AG04450 (cell line): ENCODE measurements at regions of chr13 and their contacts with region 1.

Region 1: DNA sequence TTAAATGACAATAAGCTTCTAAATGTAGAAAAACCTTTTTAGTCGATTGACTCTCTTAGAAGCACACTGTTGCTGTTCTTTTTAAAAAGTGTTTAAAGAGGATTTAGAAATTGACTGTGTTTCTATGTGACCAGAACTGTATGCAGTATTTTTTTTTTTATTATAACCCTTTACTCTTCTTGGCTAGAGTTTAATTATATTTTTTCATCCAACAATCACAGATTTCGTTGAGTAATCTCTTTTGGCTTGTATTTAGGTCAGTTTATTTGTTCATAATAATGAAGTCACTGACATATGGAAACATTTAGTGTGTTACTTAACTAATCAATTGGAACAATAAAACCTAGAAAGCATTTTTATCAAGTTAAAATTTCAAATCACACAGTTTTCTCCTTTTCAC is 19.9 kb downstream of the CSNK1A1L start:
- DNase-seq: no peak
- H3K4me3 ChIP-seq: no peak overlapping the region
- H3K27ac ChIP-seq: no peak overlapping the region
- H3K27me3 ChIP-seq: no peaks in the 10 kb centered on the region
- CTCF ChIP-seq: no peak

Region 2: DNA sequence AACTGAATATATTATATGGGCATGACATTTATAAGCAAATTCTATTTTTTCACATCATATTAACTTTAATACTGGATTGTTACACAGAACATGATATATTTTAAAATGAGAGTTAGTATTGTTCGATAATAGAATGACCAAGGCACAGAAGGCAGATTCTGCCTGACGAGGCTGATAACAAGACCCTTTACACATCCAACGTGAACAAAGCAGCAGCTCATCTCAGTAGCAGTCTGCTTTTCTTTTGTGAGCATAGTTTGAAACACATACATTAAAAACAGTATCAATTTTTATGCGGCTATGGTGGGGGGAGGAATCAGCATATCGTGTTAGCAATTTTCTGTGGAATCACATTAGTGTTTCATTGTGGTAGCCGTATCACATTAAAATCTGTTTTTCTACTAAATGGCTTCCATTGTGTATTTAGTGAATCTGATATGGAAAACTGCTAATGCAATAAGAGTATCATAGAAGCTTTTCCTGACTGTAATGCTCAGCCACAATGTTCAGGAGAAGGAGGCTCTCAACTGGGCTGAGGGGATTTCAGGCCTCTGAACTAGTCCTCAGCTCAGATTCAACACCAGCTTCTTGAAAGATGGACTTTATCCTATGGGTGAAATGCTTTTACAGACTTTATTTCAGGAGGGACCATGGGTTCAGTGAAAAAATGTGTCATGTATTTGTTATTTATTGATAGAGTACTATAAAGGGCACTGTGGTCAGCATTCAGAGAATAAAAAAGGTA is 169.5 kb before region 1 on chr13:
- CTCF ChIA-PET with region 1: no interaction called
- POLR2A ChIA-PET with region 1: interaction called, 13 read pairs
- DNase-seq: no peak
- H3K4me3 ChIP-seq: no peak overlapping the region
- H3K27ac ChIP-seq: no peak overlapping the region
- H3K27me3 ChIP-seq: no peaks in the 10 kb centered on the region
- CTCF ChIP-seq: no peak

Region 3: GRCh38 chr13:36973621-36974295 is 111.8 kb before region 1 on chr13:
- CTCF ChIA-PET with region 1: no interaction called
- POLR2A ChIA-PET with region 1: no interaction called
- DNase-seq: no peak
- H3K4me3 ChIP-seq: no peak overlapping the region
- H3K27ac ChIP-seq: no peak overlapping the region
- H3K27me3 ChIP-seq: no peaks in the 10 kb centered on the region
- CTCF ChIP-seq: no peak

Region 4: DNA sequence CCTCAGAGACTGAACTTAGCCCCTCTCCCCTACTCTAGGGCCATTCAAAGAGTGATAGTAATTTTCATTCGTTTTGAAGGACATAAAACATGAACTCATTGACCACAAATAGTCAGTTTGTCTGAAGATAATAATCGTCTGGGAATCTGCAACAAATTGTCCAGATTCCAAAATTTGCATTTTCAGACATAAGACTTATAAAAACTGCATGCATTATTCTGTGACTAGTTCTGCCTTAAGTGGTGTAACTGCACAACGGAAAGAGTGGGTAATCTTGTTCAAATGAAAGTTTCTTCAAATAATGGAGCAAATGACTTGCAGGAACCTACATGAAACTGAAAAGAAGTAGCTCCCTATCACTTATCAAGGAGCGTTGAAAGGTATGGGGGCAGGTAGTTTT is 11.5 kb after region 1 on chr13:
- CTCF ChIA-PET with region 1: no interaction called
- POLR2A ChIA-PET with region 1: no interaction called
- DNase-seq: no peak
- H3K4me3 ChIP-seq: no peak overlapping the region
- H3K27ac ChIP-seq: no peak overlapping the region
- H3K27me3 ChIP-seq: no peaks in the 10 kb centered on the region
- CTCF ChIP-seq: no peak

Region 5: DNA sequence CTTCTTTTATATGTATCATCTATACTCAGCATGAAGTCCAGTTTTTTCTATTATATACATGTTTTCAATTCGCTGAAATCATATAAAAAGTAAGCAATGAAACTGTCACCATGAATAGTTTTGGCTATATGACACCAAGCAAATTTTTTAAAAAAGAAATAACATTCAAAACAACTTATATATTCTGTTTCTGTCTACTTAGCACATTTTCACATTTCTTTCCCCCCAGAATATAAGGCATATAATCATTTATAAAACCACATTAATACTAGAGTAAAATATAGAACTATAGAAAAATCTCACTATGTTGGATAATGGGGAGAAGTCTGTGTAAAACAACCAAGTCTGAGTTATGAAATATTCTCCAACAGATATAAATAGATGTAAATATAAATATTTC is 479.8 kb after region 1 on chr13:
- CTCF ChIA-PET with region 1: no interaction called
- POLR2A ChIA-PET with region 1: no interaction called
- DNase-seq: no peak
- H3K4me3 ChIP-seq: no peak overlapping the region
- H3K27ac ChIP-seq: no peak overlapping the region
- H3K27me3 ChIP-seq: no peaks in the 10 kb centered on the region
- CTCF ChIP-seq: no peak